ENCODE measurements at regions of chr1 and their contacts with region 1.

Region 1: DNA sequence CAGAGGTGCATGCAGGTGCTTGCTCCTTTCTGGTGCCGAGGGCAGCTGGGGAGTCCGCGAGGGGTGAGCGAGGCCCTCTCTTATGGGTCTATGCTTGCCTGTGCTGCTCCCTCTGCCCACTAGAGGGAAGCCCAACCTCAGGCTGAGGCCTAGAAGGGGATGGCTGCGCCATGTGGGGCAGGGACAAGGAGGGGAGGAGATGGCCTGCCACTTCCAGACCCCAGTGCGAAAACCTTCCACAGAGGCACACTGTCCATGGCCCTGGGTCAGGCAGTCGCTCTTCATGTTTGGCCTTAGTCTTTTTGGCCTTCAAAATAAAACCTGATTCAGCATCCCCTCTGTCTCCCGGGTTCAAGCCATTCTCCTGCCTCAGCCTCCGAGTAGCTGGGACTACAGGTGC is 14.0 kb downstream of the RHBG start:
- DNase-seq: peak; percentile 75
- H3K4me3 Mint-ChIP-seq: no peak overlapping the region
- H3K27ac Mint-ChIP-seq: no peak overlapping the region
- H3K4me1 Mint-ChIP-seq: peaks cover 4% of the 10 kb centered on the region
- H3K27me3 Mint-ChIP-seq: peaks cover 21% of the 10 kb centered on the region

Region 2: GRCh38 chr1:156045076-156045475 is 337.9 kb before region 1 on chr1:
- CTCF ChIA-PET with region 1: no interaction called
- intact Hi-C with region 1: no loop called
- DNase-seq: no peak
- H3K4me3 Mint-ChIP-seq: no peak overlapping the region
- H3K27ac Mint-ChIP-seq: no peak overlapping the region
- H3K4me1 Mint-ChIP-seq: no peaks in the 10 kb centered on the region
- H3K27me3 Mint-ChIP-seq: no peaks in the 10 kb centered on the region

Region 3: DNA sequence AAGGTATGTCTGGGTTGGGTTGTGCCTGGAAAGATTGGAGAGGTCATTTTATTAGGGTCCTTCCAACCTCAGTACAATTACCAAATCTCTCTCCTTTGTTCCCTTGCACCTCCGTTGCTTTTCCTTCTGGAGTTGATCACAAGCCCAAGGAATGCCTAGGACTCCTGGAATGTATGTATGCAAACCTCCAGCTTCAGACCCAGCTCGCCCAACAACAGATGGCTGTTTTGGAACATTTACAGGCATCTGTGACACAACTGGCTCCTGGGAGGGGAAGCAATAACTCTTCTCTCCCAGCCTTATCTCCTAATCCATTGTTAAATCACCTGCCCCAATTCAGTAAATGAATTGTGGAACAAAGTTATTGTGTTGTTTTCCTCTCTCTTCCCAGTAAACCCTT is 36.4 kb before region 1 on chr1:
- CTCF ChIA-PET with region 1: interaction called, 13 read pairs
- intact Hi-C with region 1: no loop called
- DNase-seq: no peak
- H3K4me3 Mint-ChIP-seq: no peak overlapping the region
- H3K27ac Mint-ChIP-seq: no peak overlapping the region
- H3K4me1 Mint-ChIP-seq: no peaks in the 10 kb centered on the region
- H3K27me3 Mint-ChIP-seq: peaks cover 2% of the 10 kb centered on the region

Region 4: GRCh38 chr1:156371553-156372264 is 11.3 kb before region 1 on chr1:
- CTCF ChIA-PET with region 1: interaction called, 36 read pairs
- intact Hi-C with region 1: no loop called
- DNase-seq: no peak
- H3K4me3 Mint-ChIP-seq: no peak overlapping the region
- H3K27ac Mint-ChIP-seq: no peak overlapping the region
- H3K4me1 Mint-ChIP-seq: peaks cover 4% of the 10 kb centered on the region
- H3K27me3 Mint-ChIP-seq: peaks cover 19% of the 10 kb centered on the region

Region 5: GRCh38 chr1:156406251-156406650 is 23.2 kb after region 1 on chr1:
- CTCF ChIA-PET with region 1: interaction called, 11 read pairs
- intact Hi-C with region 1: no loop called
- DNase-seq: no peak
- H3K4me3 Mint-ChIP-seq: no peak overlapping the region
- H3K27ac Mint-ChIP-seq: no peak overlapping the region
- H3K4me1 Mint-ChIP-seq: no peaks in the 10 kb centered on the region
- H3K27me3 Mint-ChIP-seq: peaks cover 13% of the 10 kb centered on the region

Region 6: GRCh38 chr1:156445789-156446263 is 62.8 kb after region 1 on chr1:
- CTCF ChIA-PET with region 1: interaction called, 348 read pairs
- intact Hi-C with region 1: loop called (anchors 1 kb)
- DNase-seq: peak; percentile 93
- H3K4me3 Mint-ChIP-seq: no peak overlapping the region
- H3K27ac Mint-ChIP-seq: peak overlapping the region; percentile 22
- H3K4me1 Mint-ChIP-seq: peaks cover 21% of the 10 kb centered on the region
- H3K27me3 Mint-ChIP-seq: peaks cover 28% of the 10 kb centered on the region

Region 7: GRCh38 chr1:156476501-156477298 is 93.7 kb after region 1 on chr1:
- CTCF ChIA-PET with region 1: no interaction called
- intact Hi-C with region 1: no loop called
- DNase-seq: no peak
- H3K4me3 Mint-ChIP-seq: no peak overlapping the region
- H3K27ac Mint-ChIP-seq: peak overlapping the region; percentile 4
- H3K4me1 Mint-ChIP-seq: peaks cover 29% of the 10 kb centered on the region
- H3K27me3 Mint-ChIP-seq: no peaks in the 10 kb centered on the region